ENCODE measurements at regions of chr6 and their contacts with region 1.

Region 1: DNA sequence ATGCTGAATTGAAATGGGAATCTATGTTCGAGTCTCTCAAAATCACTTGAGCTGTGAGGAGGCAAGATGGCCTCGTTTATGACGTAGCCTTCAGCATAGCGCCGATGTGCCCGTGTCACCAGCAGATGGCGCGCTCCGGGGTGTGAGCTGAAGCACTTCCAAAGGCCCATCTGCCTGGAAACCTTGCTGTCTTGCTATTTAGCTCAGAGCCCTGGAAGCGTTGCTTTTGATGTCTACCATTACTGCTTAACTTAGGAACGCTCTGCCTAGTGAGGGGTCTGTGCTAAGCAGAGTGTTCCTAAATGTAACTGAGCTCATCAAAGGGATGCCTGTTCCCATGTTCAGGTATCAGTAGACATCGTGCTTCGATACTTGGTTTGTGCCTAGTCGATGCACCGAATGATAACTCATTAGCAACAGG is 67.7 kb downstream of the SYCP2L start:
- DNase-seq: peak; percentile 90
- ATAC-seq: peak; percentile 85
- H3K4me3 Mint-ChIP-seq: no peak overlapping the region
- H3K27ac Mint-ChIP-seq: no peak overlapping the region
- H3K4me1 Mint-ChIP-seq: no peaks in the 10 kb centered on the region
- H3K27me3 Mint-ChIP-seq: peaks cover 18% of the 10 kb centered on the region

Region 2: DNA sequence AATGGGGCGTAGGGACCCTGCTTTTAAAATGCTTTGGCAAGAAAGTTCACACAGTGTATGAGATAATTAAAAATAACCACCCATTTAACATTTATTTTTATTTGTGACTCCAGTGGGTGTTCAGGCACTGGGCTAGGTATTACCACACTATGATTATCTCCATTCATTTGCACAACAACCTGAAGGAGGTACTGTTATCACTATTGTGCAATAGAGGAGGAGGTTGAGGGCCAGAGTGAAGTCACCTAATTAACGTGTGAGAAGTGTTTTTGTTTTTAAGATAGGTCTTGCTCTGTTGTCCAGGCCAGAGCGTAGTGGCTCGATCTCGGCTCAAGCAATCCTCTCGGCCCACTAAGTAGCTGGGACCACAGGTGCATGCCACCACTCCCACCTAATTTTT is 145.5 kb before region 1 on chr6:
- CTCF ChIA-PET with region 1: no interaction called
- POLR2A ChIA-PET with region 1: no interaction called
- intact Hi-C with region 1: no loop called
- DNase-seq: no peak
- ATAC-seq: no peak
- H3K4me3 Mint-ChIP-seq: no peak overlapping the region
- H3K27ac Mint-ChIP-seq: no peak overlapping the region
- H3K4me1 Mint-ChIP-seq: no peaks in the 10 kb centered on the region
- H3K27me3 Mint-ChIP-seq: no peaks in the 10 kb centered on the region

Region 3: GRCh38 chr6:10862361-10862760 is 92.2 kb before region 1 on chr6:
- CTCF ChIA-PET with region 1: no interaction called
- POLR2A ChIA-PET with region 1: no interaction called
- intact Hi-C with region 1: no loop called
- DNase-seq: no peak
- ATAC-seq: no peak
- H3K4me3 Mint-ChIP-seq: no peak overlapping the region
- H3K27ac Mint-ChIP-seq: no peak overlapping the region
- H3K4me1 Mint-ChIP-seq: no peaks in the 10 kb centered on the region
- H3K27me3 Mint-ChIP-seq: no peaks in the 10 kb centered on the region

Region 4: DNA sequence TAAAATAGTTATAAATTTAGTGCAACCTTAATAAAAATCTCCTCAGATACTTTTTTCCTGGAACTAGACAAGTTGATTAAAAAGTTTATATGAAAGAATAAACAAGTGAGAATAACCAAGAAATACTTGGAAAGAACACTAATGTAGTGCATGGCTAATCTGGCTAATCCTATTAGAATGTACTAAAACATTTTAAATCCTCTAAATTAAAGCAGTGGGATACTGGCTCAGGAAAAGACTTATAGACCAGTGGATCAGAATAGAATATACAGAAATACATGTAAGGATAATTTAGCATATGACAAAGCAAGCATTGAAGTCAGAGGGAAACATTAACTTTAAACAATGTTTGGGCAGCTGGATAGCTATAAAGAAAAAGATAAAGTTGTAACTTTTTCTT is 198.0 kb after region 1 on chr6:
- CTCF ChIA-PET with region 1: no interaction called
- POLR2A ChIA-PET with region 1: no interaction called
- intact Hi-C with region 1: loop called in 1 of 2 experiments (anchors 5 kb)
- DNase-seq: no peak
- ATAC-seq: no peak
- H3K4me3 Mint-ChIP-seq: no peak overlapping the region
- H3K27ac Mint-ChIP-seq: no peak overlapping the region
- H3K4me1 Mint-ChIP-seq: peaks cover 8% of the 10 kb centered on the region
- H3K27me3 Mint-ChIP-seq: peaks cover 11% of the 10 kb centered on the region

Region 5: DNA sequence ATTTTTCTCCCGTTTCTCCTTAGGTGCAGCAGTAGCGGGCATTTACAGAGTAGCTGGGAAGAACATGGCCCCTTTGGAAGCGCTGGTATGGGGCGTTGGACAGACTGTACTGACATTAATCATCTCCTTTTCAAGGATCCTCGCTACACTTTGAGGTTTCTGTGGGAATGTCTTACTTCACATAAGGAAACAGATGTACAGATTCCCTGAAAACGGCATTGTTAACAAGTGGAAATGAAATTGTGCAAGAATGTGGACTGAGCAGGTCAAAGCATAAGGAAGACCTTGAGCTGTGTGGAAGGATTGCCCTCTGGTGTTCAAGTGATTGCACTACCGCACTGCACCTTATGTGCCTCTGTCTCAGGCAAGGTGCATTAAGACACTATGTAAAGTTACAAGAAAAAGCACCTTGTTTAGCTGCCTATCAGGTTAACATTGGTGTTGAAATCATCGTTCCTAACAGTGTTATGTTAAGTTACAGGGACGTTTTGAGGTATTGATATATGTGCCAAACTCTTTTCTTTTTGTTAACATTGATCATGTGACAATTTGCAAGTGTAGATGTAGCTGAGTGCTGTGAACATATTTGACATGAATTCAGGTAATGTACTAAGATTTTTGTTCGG is 620.9 kb after region 1 on chr6:
- CTCF ChIA-PET with region 1: interaction called, 5 read pairs
- POLR2A ChIA-PET with region 1: no interaction called
- intact Hi-C with region 1: loop called (anchors 2 to 10 kb)
- DNase-seq: peak; percentile 67
- ATAC-seq: peak; percentile 98
- H3K4me3 Mint-ChIP-seq: no peak overlapping the region
- H3K27ac Mint-ChIP-seq: no peak overlapping the region
- H3K4me1 Mint-ChIP-seq: no peaks in the 10 kb centered on the region
- H3K27me3 Mint-ChIP-seq: no peaks in the 10 kb centered on the region

Region 6: DNA sequence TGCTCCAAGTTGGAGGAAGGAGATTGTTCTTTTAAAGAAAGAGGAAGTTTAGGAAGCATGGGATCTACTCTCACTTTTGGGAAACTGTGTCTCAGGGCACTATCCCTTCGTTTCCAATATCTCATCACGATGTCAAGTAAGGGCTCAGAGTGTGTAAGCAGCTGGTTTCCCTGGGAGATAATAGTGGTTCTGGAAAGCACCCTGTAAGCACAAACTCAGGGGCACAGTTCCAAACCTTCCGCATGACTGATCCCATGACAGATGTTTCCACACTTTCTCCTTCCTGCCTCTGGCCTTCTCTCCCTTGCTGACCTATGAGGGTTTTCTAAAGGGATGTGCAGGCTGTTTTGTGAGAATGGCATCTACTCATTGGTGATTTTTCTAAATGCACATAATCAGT is 790.2 kb after region 1 on chr6:
- CTCF ChIA-PET with region 1: no interaction called
- POLR2A ChIA-PET with region 1: no interaction called
- intact Hi-C with region 1: no loop called
- DNase-seq: no peak
- ATAC-seq: no peak
- H3K4me3 Mint-ChIP-seq: no peak overlapping the region
- H3K27ac Mint-ChIP-seq: no peak overlapping the region
- H3K4me1 Mint-ChIP-seq: peaks cover 12% of the 10 kb centered on the region
- H3K27me3 Mint-ChIP-seq: no peaks in the 10 kb centered on the region